Adrenal gland (tissue), 19 donors: ENCODE measurements at regions of chr9 and their contacts with region 1.

Region 1: DNA sequence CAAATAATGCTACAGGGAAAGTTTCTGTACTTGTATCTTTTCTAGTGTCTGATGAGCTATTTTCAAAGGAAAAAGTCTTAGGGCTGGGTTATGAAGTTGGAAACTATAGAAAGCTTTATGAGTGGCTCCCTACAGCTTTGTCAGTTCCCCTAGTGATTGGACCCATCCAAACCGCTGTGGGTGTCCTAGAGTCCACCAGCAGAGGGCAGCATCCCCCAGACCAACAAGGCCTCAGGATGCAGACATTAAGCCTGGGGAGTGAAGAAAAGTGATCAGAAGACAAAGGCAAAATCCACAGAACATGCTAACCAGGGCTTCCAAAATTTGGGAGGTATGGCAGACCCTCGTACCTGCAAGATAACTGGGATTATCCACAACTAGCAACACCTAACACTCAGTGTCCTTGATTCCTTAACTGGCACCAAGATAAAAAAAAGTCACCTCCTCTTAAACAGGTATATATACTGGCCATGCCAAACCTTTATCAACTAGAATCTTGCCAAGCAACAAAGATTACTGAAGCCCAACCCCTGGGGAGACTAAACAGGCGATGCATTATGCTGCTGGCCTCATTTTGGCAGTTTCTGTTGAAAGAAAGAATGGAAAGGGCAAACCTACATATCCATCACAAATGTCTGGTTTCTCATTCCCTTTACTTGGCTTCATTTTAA is 110.4 kb upstream of the NR5A1 start:
- DNase-seq: peak; percentile 68 to 92 (median 80)
- H3K4me3 ChIP-seq: no peak overlapping the region
- H3K27ac ChIP-seq: no peak overlapping the region
- H3K4me1 ChIP-seq: no peaks in the 10 kb centered on the region
- H3K27me3 ChIP-seq: no peaks in the 10 kb centered on the region
- CTCF ChIP-seq: peak; percentile 77 to 92 (median 89)
- POLR2A ChIP-seq: no peak

Region 2: DNA sequence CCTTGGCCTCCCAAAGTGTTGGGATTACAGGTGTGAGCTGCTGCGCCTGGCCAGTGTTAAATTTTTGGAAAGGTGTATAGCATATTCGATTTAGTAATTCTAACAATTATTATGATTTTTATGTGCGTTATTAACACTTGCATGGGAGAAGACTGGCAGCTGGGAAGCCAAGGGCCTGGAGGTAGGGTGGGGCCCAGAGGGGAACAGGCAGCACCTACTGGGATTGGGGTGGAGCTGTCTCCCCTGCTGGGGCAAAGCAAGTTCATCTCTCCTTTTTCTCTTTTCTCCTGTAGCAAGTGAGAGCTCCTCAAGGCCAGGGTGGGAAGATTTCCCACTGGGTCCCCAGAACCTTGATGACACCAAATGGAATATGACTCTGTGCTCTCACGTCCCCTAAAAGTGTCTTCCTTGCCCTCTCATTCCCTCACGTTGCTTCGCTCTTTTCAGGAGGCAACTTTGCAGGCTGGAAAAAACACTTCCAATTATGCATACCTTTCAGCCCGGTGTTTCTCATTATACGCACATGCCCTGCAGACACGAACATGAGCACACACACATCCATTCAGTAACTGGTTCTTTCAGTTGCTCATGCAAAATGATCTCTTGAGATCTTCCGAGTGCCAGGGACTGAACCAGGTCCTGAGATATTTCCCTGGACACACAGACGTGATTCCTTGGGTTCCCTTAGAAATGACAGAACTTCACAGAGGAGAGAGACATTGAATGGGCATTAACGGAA is 629.1 kb before region 1 on chr9:
- intact Hi-C with region 1: no loop called
- DNase-seq: no peak
- H3K4me3 ChIP-seq: no peak overlapping the region
- H3K27ac ChIP-seq: no peak overlapping the region
- H3K4me1 ChIP-seq: no peaks in the 10 kb centered on the region
- H3K27me3 ChIP-seq: peaks cover 5% of the 10 kb centered on the region
- CTCF ChIP-seq: no peak
- POLR2A ChIP-seq: no peak

Region 3: DNA sequence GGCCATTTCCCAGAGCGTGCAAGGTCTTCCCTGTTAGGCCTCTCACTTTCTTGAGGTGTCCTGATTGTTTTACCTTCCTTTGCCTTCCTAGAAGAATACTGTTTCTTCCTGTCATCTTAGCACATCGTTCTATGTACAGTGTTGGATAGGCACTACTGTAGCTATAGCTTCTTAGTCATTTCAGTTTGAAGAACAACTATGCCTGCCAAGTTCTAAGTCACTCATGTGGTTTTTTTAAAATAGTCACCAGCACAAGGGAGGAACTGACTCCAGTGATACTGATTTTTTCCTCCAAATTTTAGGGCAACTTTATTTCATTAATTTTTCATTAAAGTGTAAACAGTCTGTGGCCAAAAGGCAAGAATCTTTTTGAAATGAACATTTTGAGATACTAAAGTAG is 12.0 kb after region 1 on chr9:
- intact Hi-C with region 1: no loop called
- DNase-seq: no peak
- H3K4me3 ChIP-seq: no peak overlapping the region
- H3K27ac ChIP-seq: no peak overlapping the region
- H3K4me1 ChIP-seq: peaks cover 0 to 13% of the 10 kb centered on the region in 2 donors
- H3K27me3 ChIP-seq: no peaks in the 10 kb centered on the region
- CTCF ChIP-seq: no peak
- POLR2A ChIP-seq: no peak

Region 4: DNA sequence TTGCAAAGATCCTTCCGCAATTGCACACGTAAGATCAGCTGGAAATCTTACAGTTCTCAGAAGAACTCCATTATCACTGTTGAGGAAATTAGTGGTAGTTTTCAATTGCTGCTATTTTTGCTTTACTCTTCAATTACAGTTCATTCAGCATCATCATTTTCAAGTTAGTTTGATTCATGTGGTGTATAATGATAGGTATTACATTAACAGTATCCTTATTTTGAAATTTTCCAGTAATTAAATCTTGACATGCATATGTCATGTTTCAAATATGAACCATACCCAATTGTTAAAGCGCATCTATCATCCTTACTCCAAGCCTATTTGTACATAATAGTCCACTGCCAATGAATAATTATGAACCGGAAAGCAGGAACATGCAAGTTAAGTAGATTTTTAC is 93.2 kb after region 1 on chr9:
- intact Hi-C with region 1: loop called (anchors 5 kb)
- DNase-seq: no peak
- H3K4me3 ChIP-seq: no peak overlapping the region
- H3K27ac ChIP-seq: no peak overlapping the region
- H3K4me1 ChIP-seq: no peaks in the 10 kb centered on the region
- H3K27me3 ChIP-seq: no peaks in the 10 kb centered on the region
- CTCF ChIP-seq: no peak
- POLR2A ChIP-seq: no peak